Activated CD8-positive, alpha-beta T cell treated with anti-CD3 and anti-CD28 coated beads for 36 hours (primary cell): ENCODE measurements at regions of chr3 and their contacts with region 1.

Region 1: DNA sequence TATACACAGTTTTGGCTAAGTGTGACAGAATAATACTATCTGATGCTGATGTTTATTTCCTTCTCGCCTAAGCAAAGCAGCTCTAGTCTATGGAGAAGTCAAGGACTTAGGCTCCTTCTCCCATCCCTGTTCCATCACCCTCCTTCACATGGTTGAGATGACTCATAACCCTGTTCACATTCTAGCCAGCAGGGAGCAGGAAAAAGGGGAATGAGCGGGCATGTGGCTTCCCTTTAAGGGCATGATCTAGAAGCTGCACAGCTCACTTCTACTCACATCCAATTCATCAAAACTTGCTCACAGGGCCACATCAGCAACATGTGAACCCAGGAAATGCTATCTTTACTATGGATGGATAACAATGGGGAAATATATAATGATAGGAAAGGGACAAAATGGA is 40.9 kb downstream of the CBLB start:
- DNase-seq: peak; percentile 32
- ATAC-seq: no peak
- H3K4me3 Mint-ChIP-seq: peak overlapping the region; percentile 35
- H3K27ac Mint-ChIP-seq: peak overlapping the region; percentile 100
- H3K4me1 Mint-ChIP-seq: peaks cover 85% of the 10 kb centered on the region
- H3K27me3 Mint-ChIP-seq: no peaks in the 10 kb centered on the region
- CTCF ChIP-seq: no peak

Region 2: DNA sequence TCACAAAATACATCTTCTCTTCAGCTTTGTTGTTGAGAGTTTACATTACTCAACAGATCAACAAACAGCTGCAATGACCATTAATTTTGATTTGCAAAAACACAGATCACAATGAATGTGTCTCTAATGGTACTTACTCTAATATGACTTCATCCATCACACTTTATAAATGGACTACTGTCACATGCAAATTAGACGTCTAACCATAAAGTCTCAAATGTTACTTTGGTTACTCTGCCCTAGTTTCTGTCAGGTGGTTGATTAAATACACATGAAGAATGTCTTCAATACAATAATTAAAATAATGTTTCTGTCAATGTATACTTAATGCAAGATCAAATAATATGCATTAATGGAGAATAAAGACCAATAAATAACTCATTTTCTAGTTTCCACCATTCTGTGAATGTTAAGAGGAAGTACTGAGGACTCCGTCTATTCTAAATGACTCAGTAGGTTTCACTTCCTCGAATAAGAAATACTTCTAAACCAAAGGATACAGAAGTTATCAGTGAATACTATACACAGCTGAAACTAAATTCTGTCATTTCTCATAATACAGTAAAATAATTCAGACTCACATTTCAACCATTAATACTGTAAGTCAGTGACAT is 104.9 kb before region 1 on chr3:
- CTCF ChIA-PET with region 1: no interaction called
- POLR2A ChIA-PET with region 1: no interaction called
- intact Hi-C with region 1: no loop called
- DNase-seq: no peak
- ATAC-seq: peak; percentile 93
- H3K4me3 Mint-ChIP-seq: no peak overlapping the region
- H3K27ac Mint-ChIP-seq: peak overlapping the region; percentile 31
- H3K4me1 Mint-ChIP-seq: peaks cover 24% of the 10 kb centered on the region
- H3K27me3 Mint-ChIP-seq: no peaks in the 10 kb centered on the region
- CTCF ChIP-seq: no peak

Region 3: DNA sequence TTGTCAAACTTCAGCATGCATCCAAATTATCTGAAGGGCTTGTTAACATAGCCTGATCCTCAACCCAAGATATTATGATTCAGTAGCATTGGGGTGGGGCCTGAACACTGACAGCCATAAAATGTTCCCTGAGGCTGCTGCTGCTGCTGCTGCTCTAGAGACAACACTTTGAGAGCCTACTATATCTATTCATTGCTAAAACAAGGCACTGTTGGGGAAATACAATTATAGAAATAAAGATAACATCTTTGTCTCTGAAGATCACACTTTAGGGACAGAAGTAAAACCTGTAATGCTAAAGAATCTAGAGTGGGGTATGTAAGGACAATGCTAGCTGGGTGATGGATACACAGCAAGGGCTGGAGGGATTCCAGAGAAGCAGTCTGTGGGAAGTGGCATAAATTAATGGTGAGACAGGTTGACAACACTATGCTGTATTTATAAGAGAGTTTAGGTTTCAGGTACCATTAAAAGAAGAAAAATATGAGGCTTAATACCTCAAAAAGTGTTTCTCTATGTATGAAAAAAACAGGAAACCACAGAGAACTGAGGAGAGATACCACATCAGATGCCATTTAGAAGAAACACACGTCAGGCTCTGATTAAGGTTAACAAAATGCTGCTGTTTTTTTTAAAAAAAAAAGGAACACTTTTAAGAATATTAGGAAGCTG is 75.1 kb before region 1 on chr3:
- CTCF ChIA-PET with region 1: no interaction called
- POLR2A ChIA-PET with region 1: interaction called, 6 read pairs
- intact Hi-C with region 1: loop called (anchors 5 kb)
- DNase-seq: peak; percentile 67
- ATAC-seq: peak; percentile 78
- H3K4me3 Mint-ChIP-seq: peak overlapping the region; percentile 61
- H3K27ac Mint-ChIP-seq: peak overlapping the region; percentile 99
- H3K4me1 Mint-ChIP-seq: peaks cover 75% of the 10 kb centered on the region
- H3K27me3 Mint-ChIP-seq: no peaks in the 10 kb centered on the region
- CTCF ChIP-seq: no peak

Region 4: GRCh38 chr3:105780107-105780506 is 47.9 kb before region 1 on chr3:
- CTCF ChIA-PET with region 1: no interaction called
- POLR2A ChIA-PET with region 1: no interaction called
- intact Hi-C with region 1: no loop called
- DNase-seq: no peak
- ATAC-seq: no peak
- H3K4me3 Mint-ChIP-seq: no peak overlapping the region
- H3K27ac Mint-ChIP-seq: peak overlapping the region; percentile 59
- H3K4me1 Mint-ChIP-seq: peaks cover 63% of the 10 kb centered on the region
- H3K27me3 Mint-ChIP-seq: no peaks in the 10 kb centered on the region
- CTCF ChIP-seq: no peak

Region 5: DNA sequence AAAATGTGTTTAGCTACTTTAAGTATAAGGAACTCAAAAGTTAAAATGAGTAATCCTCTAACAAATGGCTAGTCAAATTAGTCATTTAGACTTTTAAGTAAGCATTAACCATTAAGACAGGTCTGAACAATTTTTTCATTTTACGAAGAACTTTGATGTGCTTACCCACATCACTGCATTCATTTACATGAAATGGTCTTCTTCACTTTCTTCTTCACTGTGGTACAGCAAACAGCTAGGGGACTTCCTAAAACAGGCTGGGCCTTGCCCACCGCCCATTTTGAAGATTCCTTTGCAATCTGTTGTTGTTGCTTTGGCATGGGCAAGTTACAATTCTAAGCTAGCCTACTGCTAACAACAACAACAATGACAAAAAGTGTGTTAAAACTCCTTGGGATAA is 26.6 kb before region 1 on chr3:
- CTCF ChIA-PET with region 1: interaction called, 5 read pairs
- POLR2A ChIA-PET with region 1: interaction called, 4 read pairs
- intact Hi-C with region 1: loop called (anchors 1 kb)
- DNase-seq: peak; percentile 36
- ATAC-seq: peak; percentile 71
- H3K4me3 Mint-ChIP-seq: peak overlapping the region; percentile 28
- H3K27ac Mint-ChIP-seq: peak overlapping the region; percentile 90
- H3K4me1 Mint-ChIP-seq: peaks cover 84% of the 10 kb centered on the region
- H3K27me3 Mint-ChIP-seq: no peaks in the 10 kb centered on the region
- CTCF ChIP-seq: no peak

Region 6: DNA sequence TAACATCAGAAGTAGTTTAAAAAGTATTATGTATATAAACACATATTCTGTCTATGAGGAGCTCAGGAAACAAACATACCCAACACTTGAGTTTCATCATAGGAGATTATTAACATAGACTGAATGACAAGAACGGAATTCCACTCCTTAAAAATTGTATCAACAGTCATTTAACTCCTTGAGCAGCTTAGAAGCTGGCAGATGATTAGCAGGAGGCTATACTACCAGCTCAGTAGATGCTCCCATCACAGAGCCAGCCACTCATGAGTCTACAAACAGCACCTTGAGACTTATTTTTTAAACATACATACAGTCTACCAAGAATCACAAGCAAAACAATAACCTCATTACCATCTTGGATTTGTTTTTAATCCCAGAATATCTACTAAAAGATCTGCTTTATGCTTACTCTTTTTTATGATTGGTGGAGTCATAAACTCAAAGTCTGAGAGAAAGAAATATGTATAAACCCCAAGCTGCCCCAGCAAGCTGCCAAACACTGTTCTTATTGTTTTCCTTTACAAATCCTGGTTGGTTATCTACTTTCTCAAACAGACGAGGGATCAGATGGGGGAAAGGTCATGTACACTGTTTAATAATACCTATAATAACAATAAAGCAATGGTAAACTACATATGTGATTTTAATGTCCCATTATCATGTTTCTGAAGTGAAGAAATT is 18.6 kb before region 1 on chr3:
- CTCF ChIA-PET with region 1: interaction called, 6 read pairs
- POLR2A ChIA-PET with region 1: interaction called, 12 read pairs
- intact Hi-C with region 1: no loop called
- DNase-seq: no peak
- ATAC-seq: no peak
- H3K4me3 Mint-ChIP-seq: no peak overlapping the region
- H3K27ac Mint-ChIP-seq: peak overlapping the region; percentile 77
- H3K4me1 Mint-ChIP-seq: peaks cover 72% of the 10 kb centered on the region
- H3K27me3 Mint-ChIP-seq: no peaks in the 10 kb centered on the region
- CTCF ChIP-seq: no peak

Region 7: DNA sequence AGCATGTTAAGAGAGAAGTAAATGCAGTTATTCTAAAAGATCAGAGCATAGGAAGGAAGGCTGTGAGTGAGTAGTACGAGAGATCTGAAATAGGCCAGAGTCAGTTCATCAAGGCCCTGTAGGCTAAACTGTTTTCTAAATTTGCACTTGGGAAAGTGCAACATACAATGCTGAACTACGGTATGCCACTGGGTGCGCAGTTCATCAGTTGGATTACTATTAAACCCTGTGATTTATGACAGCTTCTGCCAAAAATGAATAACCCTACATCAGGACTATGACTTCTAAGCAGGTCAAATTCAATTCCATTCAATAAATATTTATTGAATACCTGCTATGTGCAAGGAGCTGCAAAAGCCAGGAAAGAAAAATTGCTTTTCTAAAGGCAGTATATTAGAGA is 30.1 kb after region 1 on chr3:
- CTCF ChIA-PET with region 1: no interaction called
- POLR2A ChIA-PET with region 1: interaction called, 12 read pairs
- intact Hi-C with region 1: no loop called
- DNase-seq: no peak
- ATAC-seq: no peak
- H3K4me3 Mint-ChIP-seq: no peak overlapping the region
- H3K27ac Mint-ChIP-seq: peak overlapping the region; percentile 3
- H3K4me1 Mint-ChIP-seq: peaks cover 46% of the 10 kb centered on the region
- H3K27me3 Mint-ChIP-seq: no peaks in the 10 kb centered on the region
- CTCF ChIP-seq: no peak

Region 8: DNA sequence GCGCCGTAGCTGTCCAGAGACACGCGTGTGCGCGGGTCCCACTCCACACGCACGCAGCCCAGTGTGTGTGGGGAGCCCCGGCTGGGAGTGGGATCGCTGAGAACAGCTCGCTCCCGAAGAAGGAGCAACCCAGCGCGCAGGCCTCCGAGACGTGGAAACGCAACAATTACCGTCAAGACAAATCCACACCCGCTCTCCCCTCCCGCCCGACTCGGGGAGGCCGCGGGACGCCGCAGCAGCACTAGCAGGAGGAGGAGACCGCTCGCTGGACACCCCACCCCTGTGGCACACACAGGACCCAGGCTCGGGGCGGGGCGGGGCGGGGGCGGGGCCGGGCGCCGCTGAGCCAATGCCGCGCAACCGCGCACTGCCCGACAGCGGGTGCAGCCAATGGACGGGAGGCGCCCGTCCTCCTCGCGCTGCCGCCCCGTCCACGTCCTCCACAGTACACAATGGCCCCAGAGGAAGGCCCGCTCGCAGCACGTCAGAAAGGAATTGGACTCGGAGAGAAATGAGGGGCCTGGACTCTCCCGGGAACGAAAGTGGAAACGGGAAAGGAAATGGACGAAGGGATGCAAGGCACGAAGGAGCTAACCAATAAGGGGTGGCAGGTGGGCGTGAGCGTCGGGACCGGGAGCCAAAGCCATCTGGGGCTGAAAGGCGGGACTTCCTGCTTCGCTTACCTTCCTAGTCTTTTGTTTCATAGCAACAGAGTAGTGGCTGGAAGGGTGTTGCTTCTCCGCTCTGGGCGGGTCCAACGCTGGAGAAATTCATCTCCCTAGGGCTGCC is 41.0 kb after region 1 on chr3 and contains the start of gene CBLB:
- CTCF ChIA-PET with region 1: interaction called, 3 read pairs
- POLR2A ChIA-PET with region 1: interaction called, 33 read pairs
- intact Hi-C with region 1: loop called (anchors 5 kb)
- DNase-seq: peak; percentile 91
- ATAC-seq: peak; percentile 87
- H3K4me3 Mint-ChIP-seq: no peak within 1 kb of the TSS
- H3K27ac Mint-ChIP-seq: peak within 1 kb of the TSS; percentile 96
- H3K4me1 Mint-ChIP-seq: peaks cover 26% of the 10 kb centered on the region
- H3K27me3 Mint-ChIP-seq: no peaks in the 10 kb centered on the region
- CTCF ChIP-seq: no peak
- total RNA-seq, gene CBLB: 104 to 113 TPM